ENCODE measurements at regions of chr14 and their contacts with region 1.

Region 1: DNA sequence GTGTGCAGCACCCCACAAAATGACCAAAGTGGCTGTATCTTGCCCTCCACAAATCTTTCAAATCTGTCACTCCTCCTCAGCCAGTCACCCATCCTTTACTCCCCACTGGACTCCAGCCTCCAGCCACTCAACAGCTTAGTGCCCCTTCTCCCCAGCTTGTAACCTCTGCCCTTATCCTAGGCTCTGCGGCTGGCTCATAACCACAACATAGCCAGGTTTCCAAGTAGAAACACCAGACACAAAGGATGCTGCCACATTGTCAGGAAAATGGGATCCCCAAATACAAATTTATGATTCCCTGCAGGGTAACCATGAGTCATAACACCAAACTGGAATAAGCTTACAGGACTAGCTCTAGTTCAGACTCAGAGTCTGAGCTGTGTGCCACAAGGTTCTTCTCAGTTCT is 15.1 kb downstream of the OXA1L start:
- DNase-seq: peak; percentile 45
- ATAC-seq: peak; percentile 68; the same call in 1 of the 2 replicates
- H3K4me3 ChIP-seq: no peak overlapping the region
- H3K27ac ChIP-seq: no peak overlapping the region
- H3K4me1 ChIP-seq: 0 out of 2 replicates have a peak, but pooled peaks cover 4% of the 10 kb centered on the region
- H3K27me3 ChIP-seq: no peaks in the 10 kb centered on the region
- CTCF ChIP-seq: no peak

Region 2: GRCh38 chr14:21346549-21347135 is 1434.9 kb before region 1 on chr14:
- CTCF ChIA-PET with region 1: no interaction called
- POLR2A ChIA-PET with region 1: no interaction called
- intact Hi-C with region 1: loop called (anchors 10 kb)
- DNase-seq: no peak
- ATAC-seq: no peak
- H3K4me3 ChIP-seq: no peak overlapping the region
- H3K27ac ChIP-seq: no peak overlapping the region
- H3K4me1 ChIP-seq: no peaks in the 10 kb centered on the region
- H3K27me3 ChIP-seq: no peaks in the 10 kb centered on the region
- CTCF ChIP-seq: no peak

Region 3: DNA sequence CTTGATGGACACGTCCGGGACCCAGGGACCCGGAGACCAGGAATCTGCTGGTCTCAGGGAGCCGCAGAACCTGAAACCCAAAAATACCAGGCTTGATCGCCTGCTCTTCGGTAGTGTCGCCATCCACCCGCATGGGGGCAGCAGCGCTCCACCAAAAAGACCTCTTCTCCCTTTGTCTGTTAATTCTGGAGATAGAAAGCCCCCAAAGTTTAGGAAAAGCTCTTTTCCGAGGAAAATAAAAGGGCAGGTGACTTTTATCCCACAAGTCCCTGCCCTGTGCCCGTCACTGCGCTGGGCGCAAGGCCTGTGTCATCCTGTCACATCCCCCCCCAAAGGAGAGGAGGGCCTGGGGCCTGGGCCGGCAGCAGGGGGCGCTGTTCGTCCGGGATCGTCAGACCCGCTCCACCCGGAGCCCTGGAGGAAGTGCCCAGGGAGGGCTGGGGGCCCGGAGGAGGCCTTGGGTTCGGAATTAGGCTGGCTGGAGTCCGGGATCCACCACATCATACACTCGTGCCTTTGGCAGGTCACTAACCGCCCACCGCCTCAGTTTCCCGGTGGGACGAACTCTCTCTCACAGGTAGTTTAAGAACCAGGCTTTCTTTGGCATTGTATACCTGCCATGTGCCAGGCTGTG is 224.5 kb before region 1 on chr14:
- CTCF ChIA-PET with region 1: no interaction called
- POLR2A ChIA-PET with region 1: no interaction called
- intact Hi-C with region 1: loop called (anchors 5 kb)
- DNase-seq: peak; percentile 78
- ATAC-seq: peak; percentile 66
- H3K4me3 ChIP-seq: peak overlapping the region; percentile 57
- H3K27ac ChIP-seq: peak overlapping the region; percentile 94
- H3K4me1 ChIP-seq: peaks cover 51% of the 10 kb centered on the region
- H3K27me3 ChIP-seq: no peaks in the 10 kb centered on the region
- CTCF ChIP-seq: peak; percentile 99

Region 4: GRCh38 chr14:22598099-22598899 is 183.3 kb before region 1 on chr14 and contains the start of gene ABHD4:
- CTCF ChIA-PET with region 1: no interaction called
- POLR2A ChIA-PET with region 1: no interaction called
- intact Hi-C with region 1: no loop called
- DNase-seq: peak; percentile 61
- ATAC-seq: peak; percentile 82
- H3K4me3 ChIP-seq: peak within 1 kb of the TSS; percentile 89
- H3K27ac ChIP-seq: peak within 1 kb of the TSS; percentile 68
- H3K4me1 ChIP-seq: peaks cover 50% of the 10 kb centered on the region
- H3K27me3 ChIP-seq: no peaks in the 10 kb centered on the region
- CTCF ChIP-seq: no peak
- total RNA-seq, gene ABHD4: 9.1 and 9.6 TPM in 2 replicates

Region 5: DNA sequence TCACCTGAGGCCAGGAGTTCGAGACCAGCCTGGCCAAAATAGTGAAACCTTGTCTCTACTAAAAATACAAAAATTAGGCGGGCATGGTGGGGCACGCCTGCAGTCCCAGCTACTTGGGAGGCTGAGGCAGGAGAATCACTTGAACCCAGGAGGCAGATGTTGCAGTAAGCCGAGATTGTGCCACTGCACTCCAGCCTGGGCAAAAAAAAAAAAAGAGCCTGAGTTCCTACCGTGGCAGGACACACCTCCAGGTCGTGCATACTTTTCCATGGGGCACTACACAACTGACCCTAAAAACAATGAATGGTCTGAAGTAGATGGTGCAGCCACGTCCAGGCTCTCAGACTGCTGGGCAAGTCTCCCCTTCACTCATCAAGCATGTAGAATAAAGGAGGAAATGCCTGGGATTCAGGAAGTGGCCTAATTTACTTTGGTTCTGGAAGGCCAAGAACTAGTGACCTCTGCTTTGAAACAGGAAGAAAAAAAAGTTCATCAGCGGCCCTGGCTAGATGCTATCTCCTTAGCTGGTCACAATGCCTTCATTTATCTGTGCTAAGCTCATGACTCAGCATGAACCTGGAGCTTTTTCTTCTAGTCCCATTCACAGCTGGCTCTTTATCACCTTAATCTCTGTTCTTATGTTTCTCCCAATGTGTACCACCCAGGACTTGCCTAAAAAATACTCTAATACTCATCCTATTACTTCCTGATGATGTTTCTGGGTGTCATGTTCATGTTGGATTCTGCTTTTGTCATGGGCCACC is 81.6 kb before region 1 on chr14:
- CTCF ChIA-PET with region 1: no interaction called
- POLR2A ChIA-PET with region 1: no interaction called
- intact Hi-C with region 1: no loop called
- DNase-seq: peak; percentile 41
- ATAC-seq: peak; percentile 15; the same call in 1 of the 2 replicates
- H3K4me3 ChIP-seq: no peak overlapping the region
- H3K27ac ChIP-seq: no peak overlapping the region
- H3K4me1 ChIP-seq: no peaks in the 10 kb centered on the region; the same call in 1 of the 2 replicates
- H3K27me3 ChIP-seq: peaks cover under 1% of the 10 kb centered on the region; the same call in 1 of the 2 replicates
- CTCF ChIP-seq: no peak

Region 6: DNA sequence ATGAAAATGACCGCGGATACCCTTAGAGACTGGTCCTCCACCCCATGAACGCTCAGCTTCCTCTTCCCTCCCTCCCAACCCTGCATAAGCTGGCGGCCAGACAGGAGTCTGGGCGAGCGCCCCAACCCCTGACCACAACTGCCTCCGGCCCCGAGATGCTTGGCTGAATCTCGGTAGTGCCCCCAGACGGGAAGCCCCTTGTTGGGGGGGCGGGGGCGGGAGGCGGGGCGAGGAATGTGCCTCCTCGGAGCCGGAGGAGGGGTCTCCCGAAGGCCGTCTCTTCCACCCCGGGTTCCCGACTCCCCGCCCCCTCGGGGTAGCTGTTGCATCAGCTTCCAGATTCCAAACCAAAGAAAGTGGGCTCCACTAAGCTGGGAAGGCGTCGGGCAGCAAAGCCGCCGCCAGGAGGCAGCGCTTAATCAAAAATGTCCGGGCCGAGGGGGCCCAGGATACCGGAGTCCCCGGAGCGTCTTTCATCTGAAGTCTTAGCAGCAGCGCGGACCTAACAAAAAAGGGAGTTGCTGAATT is 41.0 kb after region 1 on chr14:
- CTCF ChIA-PET with region 1: interaction called, 4 read pairs
- POLR2A ChIA-PET with region 1: no interaction called
- intact Hi-C with region 1: loop called (anchors 5 kb)
- DNase-seq: peak; percentile 89
- ATAC-seq: peak; percentile 83
- H3K4me3 ChIP-seq: peak overlapping the region; percentile 62
- H3K27ac ChIP-seq: no peak overlapping the region
- H3K4me1 ChIP-seq: peaks cover 39% of the 10 kb centered on the region
- H3K27me3 ChIP-seq: no peaks in the 10 kb centered on the region
- CTCF ChIP-seq: peak; percentile 88

Region 7: GRCh38 chr14:22844221-22845102 is 62.9 kb after region 1 on chr14:
- CTCF ChIA-PET with region 1: no interaction called
- POLR2A ChIA-PET with region 1: interaction called, 12 read pairs
- intact Hi-C with region 1: no loop called
- DNase-seq: no peak
- ATAC-seq: no peak
- H3K4me3 ChIP-seq: no peak overlapping the region
- H3K27ac ChIP-seq: no peak overlapping the region
- H3K4me1 ChIP-seq: 0 out of 2 replicates have a peak, but pooled peaks cover 5% of the 10 kb centered on the region
- H3K27me3 ChIP-seq: no peaks in the 10 kb centered on the region
- CTCF ChIP-seq: no peak

Measured in PC-3 (cell line).